ENCODE measurements at regions of chr11 and their contacts with region 1.

Region 1: GRCh38 chr11:117851106-117851505 is 25.4 kb downstream of the FXYD6 start:
- DNase-seq: no peak
- H3K4me3 Mint-ChIP-seq: no peak overlapping the region
- H3K27ac Mint-ChIP-seq: no peak overlapping the region
- H3K4me1 Mint-ChIP-seq: peaks cover 8% of the 10 kb centered on the region
- H3K27me3 Mint-ChIP-seq: peaks cover 30% of the 10 kb centered on the region

Region 2: DNA sequence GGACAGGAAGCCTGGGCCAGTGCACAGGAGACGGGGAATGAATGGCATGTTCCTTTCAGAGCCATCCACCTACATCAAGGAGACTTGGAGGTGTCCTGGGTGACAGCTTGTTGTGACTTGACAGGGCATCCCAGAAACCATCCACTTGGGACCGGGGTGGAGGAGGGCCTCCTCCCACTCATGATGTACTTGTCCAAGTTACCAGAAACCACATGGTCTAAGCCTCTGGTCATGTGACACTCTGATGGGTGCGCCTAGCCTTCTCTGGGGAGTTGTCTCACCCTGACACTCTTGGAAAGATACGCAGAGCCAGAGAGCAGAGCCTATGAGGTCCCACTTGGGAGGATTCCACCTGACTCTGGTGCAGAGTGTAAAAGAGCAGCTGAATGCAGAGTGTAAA is 47.0 kb after region 1 on chr11:
- intact Hi-C with region 1: loop called (anchors 5 kb)
- DNase-seq: no peak
- H3K4me3 Mint-ChIP-seq: no peak overlapping the region
- H3K27ac Mint-ChIP-seq: no peak overlapping the region
- H3K4me1 Mint-ChIP-seq: peaks cover 7% of the 10 kb centered on the region
- H3K27me3 Mint-ChIP-seq: peaks cover 39% of the 10 kb centered on the region

Region 3: GRCh38 chr11:118238929-118239328 is 387.8 kb after region 1 on chr11:
- intact Hi-C with region 1: no loop called
- DNase-seq: peak; percentile 67
- H3K4me3 Mint-ChIP-seq: peak overlapping the region; percentile 87
- H3K27ac Mint-ChIP-seq: peak overlapping the region; percentile 98
- H3K4me1 Mint-ChIP-seq: peaks cover 70% of the 10 kb centered on the region
- H3K27me3 Mint-ChIP-seq: peaks cover 2% of the 10 kb centered on the region

Measured in activated CD4-positive, alpha-beta T cell treated with anti-CD3 and anti-CD28 coated beads, Interleukin-2, amount 10 ng/mL, durations not matched to agents 24 days and 14 days (primary cell).